ENCODE measurements at regions of chr3 and their contacts with region 1.

Region 1: DNA sequence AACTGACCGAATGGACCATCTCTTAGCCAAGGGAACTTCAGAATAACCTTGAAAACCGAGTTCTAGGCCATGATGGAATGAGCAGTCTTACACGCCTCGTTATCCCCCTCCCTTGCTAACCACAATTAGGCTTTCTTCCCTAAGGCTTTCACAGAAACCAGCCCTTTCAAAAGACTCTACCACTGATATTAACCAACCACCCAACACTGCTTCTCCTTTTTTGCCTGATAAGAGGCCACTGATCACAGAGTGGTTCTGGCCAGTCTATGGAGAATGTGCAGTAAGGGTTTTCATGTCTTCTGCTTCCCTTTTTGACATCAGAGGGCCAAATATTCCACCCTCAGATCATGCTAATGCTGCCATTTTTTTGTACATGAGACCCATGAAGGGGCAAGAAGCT is 59.3 kb downstream of the MCF2L2 start:
- DNase-seq: no peak
- ATAC-seq: peak; percentile 13; the same call in 1 of the 3 replicates
- H3K4me3 ChIP-seq: no peak overlapping the region
- H3K27ac ChIP-seq: no peak overlapping the region
- H3K4me1 ChIP-seq: peaks cover 9% of the 10 kb centered on the region
- H3K27me3 ChIP-seq: no peaks in the 10 kb centered on the region
- CTCF ChIP-seq: no peak
- EP300 ChIP-seq: no peak
- POLR2A ChIP-seq: no peak
- RAD21 ChIP-seq: no peak

Region 2: DNA sequence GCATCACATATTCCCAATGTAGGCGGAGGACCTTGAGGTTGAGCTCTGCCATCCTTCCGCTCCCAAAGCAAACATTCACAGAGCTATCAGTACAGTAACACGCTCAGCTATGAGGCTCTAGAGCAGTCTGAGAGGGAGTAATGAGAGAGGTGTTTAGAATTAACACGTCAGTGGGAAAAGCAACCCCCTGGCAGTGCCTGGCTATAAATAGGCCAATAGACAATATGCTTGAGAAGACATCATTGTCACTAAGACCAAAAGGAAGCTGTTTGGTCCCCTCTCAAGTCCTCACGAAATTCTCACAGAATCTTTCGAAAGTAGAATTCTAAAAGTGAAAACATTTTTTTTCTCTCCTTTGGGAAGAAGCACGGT is 27.2 kb before region 1 on chr3:
- CTCF ChIA-PET with region 1: no interaction called
- POLR2A ChIA-PET with region 1: no interaction called
- RAD21 ChIA-PET with region 1: no interaction called
- SMC1A ChIA-PET with region 1: no interaction called
- in situ Hi-C with region 1: no loop called
- intact Hi-C with region 1: no loop called
- DNase-seq: no peak
- ATAC-seq: no peak
- H3K4me3 ChIP-seq: no peak overlapping the region
- H3K27ac ChIP-seq: no peak overlapping the region
- H3K4me1 ChIP-seq: no peaks in the 10 kb centered on the region
- H3K27me3 ChIP-seq: no peaks in the 10 kb centered on the region
- CTCF ChIP-seq: no peak
- EP300 ChIP-seq: no peak
- POLR2A ChIP-seq: no peak
- RAD21 ChIP-seq: no peak

Region 3: DNA sequence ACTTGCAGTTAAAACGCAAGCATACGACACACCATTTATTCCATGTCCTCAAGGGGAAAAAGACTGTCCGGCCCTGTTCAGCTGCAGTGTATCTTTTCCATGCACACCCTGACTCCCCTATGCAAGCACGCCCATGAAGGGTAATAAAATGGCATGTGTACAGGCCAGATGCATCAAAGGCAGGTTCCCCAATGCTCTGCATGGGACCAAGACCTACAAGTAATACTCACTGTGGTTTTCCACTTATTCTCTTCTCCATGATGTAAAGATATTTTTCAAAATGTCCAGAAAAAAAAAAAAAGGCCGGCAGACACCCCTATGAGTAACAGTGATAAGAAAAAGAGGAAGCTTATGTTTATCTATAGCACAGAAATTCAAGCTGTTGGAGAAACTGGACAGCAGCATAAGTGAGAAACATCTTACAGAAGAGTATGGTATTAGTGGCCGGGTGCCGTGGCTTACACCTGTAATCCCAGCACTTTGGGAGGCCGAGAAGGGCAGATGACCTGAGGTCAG is 11.5 kb before region 1 on chr3:
- CTCF ChIA-PET with region 1: interaction called, 7 read pairs
- POLR2A ChIA-PET with region 1: no interaction called
- RAD21 ChIA-PET with region 1: no interaction called
- SMC1A ChIA-PET with region 1: interaction called, 11 read pairs
- in situ Hi-C with region 1: no loop called
- intact Hi-C with region 1: no loop called
- DNase-seq: no peak
- ATAC-seq: no peak
- H3K4me3 ChIP-seq: no peak overlapping the region
- H3K27ac ChIP-seq: no peak overlapping the region
- H3K4me1 ChIP-seq: no peaks in the 10 kb centered on the region
- H3K27me3 ChIP-seq: no peaks in the 10 kb centered on the region
- CTCF ChIP-seq: no peak
- EP300 ChIP-seq: no peak
- POLR2A ChIP-seq: no peak
- RAD21 ChIP-seq: no peak

Region 4: GRCh38 chr3:183400352-183400751 is 31.2 kb after region 1 on chr3:
- CTCF ChIA-PET with region 1: no interaction called
- POLR2A ChIA-PET with region 1: no interaction called
- RAD21 ChIA-PET with region 1: no interaction called
- SMC1A ChIA-PET with region 1: no interaction called
- in situ Hi-C with region 1: no loop called
- intact Hi-C with region 1: no loop called
- DNase-seq: no peak
- ATAC-seq: no peak
- H3K4me3 ChIP-seq: no peak overlapping the region
- H3K27ac ChIP-seq: no peak overlapping the region
- H3K4me1 ChIP-seq: no peaks in the 10 kb centered on the region
- H3K27me3 ChIP-seq: no peaks in the 10 kb centered on the region; a peak in 1 of 4 replicates
- CTCF ChIP-seq: no peak
- EP300 ChIP-seq: no peak
- POLR2A ChIP-seq: no peak
- RAD21 ChIP-seq: no peak

Measured in GM12878 (cell line).